HAP-1 (cell line): ENCODE measurements at regions of chr12 and their contacts with region 1.

Region 1: DNA sequence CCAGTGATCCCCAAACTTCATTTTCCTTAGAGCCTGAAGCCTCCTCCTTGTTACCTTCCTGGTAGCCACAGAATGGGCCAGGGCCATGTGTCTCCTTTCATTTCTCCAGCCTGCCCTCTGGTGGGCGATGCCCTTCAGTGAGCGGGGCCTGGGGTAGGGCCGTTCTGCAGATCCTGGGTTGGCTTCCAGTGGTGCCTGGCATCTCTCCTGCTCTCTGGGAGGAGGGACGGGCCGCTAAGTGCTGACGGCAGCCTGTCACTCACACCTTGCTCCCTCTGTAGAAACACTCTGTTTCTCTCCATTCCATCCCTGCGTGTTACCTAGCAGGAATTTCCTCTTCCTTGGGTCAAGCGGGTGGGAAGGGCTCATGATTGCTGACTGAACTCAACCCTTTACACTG is 232.1 kb downstream of the CACNA1C start:
- DNase-seq: peak; percentile 31 to 72
- H3K4me3 ChIP-seq: no peak overlapping the region
- H3K4me1 ChIP-seq: no peaks in the 10 kb centered on the region
- H3K27me3 ChIP-seq: peaks cover 6% of the 10 kb centered on the region; the same call in 1 of the 2 replicates

Region 2: DNA sequence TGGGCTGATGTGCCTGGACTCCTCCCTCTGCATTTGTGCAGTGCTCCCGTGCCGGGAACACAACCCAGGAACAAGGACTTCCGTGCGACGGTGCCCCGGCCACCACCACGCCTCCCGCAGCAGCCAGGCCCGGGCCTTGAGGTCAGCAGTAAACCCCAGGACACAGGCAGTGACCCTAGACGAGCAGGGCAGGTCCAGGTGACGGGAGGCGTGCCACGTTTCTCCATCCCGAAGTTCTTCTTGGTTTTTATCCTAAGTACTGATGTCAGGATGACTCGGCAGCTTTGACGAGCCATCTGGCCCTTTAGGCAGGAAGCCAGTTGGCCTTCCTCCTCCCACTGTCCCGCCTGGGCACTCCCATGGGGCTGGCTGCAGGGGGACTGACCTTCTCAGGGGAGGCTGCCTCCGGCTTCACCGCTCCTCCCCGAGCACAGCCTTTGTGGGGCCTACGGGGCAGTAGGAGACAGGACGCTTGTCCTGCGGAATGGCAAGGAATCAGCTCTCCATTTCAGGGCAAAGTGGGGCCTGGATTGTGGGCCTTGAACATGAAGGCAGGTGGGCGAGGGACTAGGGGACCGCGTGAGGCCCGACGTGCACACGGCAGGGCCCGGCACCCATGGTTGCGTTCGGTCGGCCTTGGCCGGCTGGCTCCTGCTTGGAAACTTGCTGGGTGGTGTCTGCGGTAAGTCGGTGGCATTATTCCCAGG is 784.6 kb before region 1 on chr12:
- in situ Hi-C with region 1: no loop called
- DNase-seq: no peak
- H3K4me3 ChIP-seq: no peak overlapping the region
- H3K4me1 ChIP-seq: no peaks in the 10 kb centered on the region
- H3K27me3 ChIP-seq: no peaks in the 10 kb centered on the region

Region 3: DNA sequence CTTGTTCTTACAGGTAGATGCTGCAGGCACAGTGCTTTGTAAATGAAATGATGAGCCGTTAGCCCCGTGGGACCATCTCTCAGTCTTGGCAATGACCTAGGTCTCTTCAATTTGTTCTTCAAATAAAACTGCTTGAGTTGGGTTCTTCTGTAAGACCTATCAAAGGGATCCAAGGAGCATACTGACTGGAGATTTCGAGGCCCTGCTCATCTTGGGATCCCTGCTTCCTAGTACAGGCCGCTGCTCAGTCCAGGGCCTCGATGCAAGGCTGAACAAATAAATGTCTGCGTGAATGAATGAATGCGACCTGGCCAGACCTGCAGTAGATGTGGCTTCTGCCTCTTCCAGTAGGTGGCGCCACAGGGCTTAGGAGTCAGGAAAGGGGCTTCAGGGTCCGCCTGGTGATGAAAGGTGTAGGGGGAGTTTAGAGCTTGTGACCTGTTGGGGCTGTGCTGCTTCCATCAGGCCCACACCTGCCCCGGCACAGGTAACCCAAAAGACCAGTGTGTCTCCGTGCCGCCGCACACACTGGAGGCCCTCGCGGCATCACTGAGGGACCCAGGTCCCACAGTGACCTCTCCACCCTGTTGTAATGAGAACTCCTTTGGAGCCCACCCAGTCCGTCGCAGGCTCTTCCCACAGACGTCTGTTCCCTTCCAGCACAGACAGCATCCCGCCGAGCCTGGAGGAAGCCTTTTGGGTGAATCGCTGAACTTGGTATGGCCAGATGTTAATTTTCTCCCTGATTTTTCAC is 227.6 kb before region 1 on chr12:
- in situ Hi-C with region 1: loop called (anchors 10 kb)
- DNase-seq: peak; percentile 25 to 84
- H3K4me3 ChIP-seq: no peak overlapping the region
- H3K4me1 ChIP-seq: no peaks in the 10 kb centered on the region; the same call in none of the 2 replicates
- H3K27me3 ChIP-seq: peaks cover 56% of the 10 kb centered on the region

Region 4: GRCh38 chr12:2640705-2641104 is 355.8 kb after region 1 on chr12:
- in situ Hi-C with region 1: no loop called
- DNase-seq: no peak
- H3K4me3 ChIP-seq: no peak overlapping the region
- H3K4me1 ChIP-seq: no peaks in the 10 kb centered on the region
- H3K27me3 ChIP-seq: peaks cover 19% of the 10 kb centered on the region